Keratinocyte (primary cell): ENCODE measurements at regions of chr15 and their contacts with region 1.

Region 1: DNA sequence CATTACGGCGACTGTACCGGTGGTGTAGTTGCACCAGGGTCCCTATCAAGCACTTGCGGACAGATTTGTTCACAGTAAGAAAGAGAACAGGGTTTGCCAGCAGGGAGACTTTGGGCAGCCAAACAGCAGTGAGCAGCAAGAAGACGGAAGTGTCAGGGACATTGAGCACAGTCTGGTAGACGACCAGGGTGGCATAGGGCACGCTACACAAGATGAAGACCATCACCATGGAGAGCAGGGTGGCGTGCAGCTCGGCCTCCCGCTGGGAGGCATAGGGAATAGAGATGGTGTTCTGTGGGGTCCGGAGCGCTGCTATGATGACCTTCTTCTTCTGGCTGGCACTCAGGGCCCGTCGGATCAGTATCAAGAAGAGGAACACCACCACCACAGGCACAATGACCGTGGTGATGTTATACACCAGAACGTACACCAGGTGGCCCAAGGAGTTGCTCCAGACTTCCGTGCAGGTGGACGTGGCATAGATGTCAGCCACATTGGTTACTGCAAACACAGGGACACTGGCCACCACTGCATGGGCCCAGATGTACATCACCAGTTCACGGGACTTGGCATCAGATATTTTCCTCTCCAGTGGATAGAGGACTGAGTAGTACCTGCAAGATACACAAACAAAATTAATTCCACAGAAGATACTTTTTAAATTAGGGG is 19.1 kb upstream of the FSIP1 start:
- DNase-seq: no peak
- H3K4me3 ChIP-seq: no peak overlapping the region
- H3K27ac ChIP-seq: no peak overlapping the region
- H3K4me1 ChIP-seq: peaks cover 18% of the 10 kb centered on the region
- H3K27me3 ChIP-seq: no peaks in the 10 kb centered on the region
- CTCF ChIP-seq: peak; percentile 48 to 76 (median 53)

Region 2: DNA sequence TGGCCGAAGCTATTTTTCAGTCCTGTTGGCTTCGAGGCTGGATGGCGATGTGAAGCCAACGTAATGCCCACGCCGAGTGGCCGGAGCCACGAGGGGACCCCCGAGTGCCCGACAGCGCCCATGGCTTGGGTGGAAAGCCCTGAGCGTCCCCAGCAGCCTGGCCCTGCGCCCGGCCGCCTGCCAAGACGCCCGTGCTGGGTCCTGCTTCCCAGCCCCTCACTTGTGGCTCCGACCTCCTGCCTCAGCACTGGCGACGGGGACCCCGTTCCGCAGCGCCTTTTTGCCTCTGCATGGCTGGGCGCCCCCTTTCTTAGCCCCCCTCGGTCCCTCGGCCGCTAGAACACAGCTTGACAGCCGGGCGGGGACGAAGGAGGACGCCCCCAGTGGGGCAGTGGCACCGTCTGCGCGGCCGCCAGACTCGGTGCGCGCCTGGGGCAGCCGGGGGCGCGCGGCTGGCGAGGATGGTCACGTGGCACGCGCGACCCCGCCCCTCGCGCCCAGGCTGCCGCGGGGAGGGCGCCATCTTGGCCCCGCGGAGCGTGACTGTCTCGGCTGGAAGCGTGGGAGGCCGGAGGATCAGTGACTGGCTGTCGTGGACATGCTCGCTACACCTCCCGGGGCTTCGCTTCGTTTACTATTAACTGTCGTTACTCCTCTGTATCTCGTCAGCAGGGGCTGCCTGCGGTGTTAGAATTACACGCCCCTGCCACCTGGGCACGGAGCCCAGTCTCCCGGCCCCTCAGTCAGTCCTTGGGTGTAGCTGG is 118.9 kb after region 1 on chr15:
- dilution Hi-C with region 1: loop called (anchors 25 kb)
- DNase-seq: no peak
- H3K4me3 ChIP-seq: peak overlapping the region; percentile 60 to 91 (median 86)
- H3K27ac ChIP-seq: peak overlapping the region; percentile 96
- H3K4me1 ChIP-seq: peaks cover 23% of the 10 kb centered on the region
- H3K27me3 ChIP-seq: no peaks in the 10 kb centered on the region
- CTCF ChIP-seq: peak in 1 of 3 experiments; percentile 26